ENCODE measurements at regions of chr20 and their contacts with region 1.

Region 1: DNA sequence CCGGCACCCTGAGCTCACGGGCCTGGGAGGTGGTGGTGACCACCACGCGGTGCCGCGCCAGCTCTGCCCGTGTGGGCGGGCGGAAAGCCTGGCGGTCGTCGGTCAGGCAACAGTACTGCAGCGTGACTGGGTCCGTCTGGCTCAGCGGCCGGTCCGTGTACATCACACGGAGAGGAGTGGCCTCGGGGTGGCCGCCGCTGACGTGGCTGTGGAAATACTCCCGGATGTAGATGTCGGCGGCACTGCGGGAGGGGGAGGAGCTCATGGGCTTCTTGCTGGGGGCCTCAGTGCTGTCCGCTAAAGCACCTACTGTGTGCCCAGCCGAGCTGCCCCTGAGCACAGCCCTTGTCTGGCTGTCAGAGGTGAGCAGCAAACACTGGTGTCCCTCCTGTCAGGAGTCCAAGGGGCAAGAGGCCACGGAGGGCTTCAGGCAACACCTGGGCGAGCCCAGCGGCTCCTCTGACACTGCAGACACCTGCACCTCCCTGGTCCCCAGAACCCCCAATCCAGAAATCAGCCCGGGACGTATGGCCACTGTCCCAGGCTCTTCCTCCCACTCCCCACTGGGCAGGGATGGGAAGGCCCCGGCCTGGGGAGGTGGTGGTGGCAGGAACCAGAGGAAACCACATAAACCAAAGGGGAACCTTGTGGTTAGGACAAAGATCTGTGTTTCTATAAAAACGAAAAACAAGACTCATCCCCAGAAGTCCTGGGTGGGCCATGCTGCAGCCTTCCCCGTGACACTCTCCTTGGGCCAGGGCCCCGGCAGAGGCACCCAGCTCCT is 6.5 kb downstream of the HELZ2 start:
- H3K4me3 Mint-ChIP-seq: peak overlapping the region; percentile 70
- H3K27ac Mint-ChIP-seq: peak overlapping the region; percentile 89
- H3K4me1 Mint-ChIP-seq: peaks cover 36% of the 10 kb centered on the region
- H3K27me3 Mint-ChIP-seq: peaks cover 66% of the 10 kb centered on the region

Region 2: DNA sequence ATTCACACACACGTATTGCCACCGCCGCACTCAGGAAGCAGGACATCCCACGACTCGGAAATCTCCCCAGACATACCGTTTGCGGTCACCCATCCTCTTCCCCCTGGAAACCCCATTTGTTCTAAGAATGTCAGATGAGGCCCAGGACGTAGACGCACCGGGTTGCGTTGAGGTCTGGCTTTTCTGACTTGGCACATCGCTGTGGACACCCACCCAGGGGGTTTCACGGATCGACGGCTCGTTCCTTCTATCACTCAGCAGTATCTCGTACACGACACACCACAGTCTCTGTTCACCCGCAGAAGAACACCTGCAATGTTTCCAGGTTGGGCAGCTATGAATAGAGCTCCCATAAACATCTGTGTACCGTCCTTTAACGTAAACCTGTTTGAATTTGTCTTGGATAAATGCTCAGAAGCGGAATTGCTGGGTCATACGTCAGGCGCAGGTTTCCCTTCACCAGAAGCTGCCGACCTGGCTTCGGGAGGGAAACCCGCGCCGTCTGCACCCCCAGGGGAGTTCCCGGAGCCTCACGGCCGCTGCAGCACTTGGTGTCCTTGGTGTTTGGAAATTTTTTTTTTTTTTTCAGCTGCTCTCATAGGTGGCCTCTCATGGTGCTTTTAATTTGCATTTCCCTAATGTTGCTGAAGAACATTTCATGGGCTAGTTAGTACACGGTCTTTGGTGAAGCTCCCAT is 59.4 kb before region 1 on chr20:
- intact Hi-C with region 1: no loop called
- H3K4me3 Mint-ChIP-seq: no peak overlapping the region
- H3K27ac Mint-ChIP-seq: no peak overlapping the region
- H3K4me1 Mint-ChIP-seq: peaks cover 6% of the 10 kb centered on the region
- H3K27me3 Mint-ChIP-seq: peaks cover 68% of the 10 kb centered on the region

Region 3: DNA sequence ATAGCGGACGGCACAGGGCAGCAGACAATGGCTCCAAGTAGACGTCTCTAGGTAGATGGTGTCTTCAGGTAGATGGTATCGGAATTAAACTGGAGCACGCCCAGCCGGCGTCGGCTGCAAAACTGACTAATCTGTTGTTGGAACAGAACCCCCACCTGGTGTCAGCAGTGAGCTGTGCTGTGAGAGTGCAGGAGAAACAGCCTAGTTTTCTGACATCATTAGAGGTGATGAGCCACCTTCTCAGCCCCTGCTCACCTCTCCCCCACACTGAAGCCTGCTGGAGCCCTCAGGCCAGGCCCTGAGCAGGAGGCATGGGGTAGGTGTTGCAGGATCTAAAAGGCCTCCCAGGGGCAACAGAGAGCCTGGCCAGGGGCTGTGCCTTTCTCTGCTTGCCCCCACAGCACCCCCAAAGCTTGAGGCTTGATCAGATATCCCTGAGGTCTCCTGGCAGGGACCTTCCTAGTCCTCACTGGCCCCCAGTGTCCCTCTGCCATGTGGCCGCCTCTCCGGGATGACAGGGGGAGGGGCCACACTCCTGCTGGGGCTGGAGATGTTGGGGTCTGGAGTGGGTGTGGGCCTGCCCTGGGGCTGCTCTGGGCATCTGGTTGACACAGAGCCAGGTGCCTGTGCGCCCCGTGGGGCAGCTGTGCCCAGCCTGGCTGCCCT is 13.4 kb after region 1 on chr20:
- intact Hi-C with region 1: no loop called
- H3K4me3 Mint-ChIP-seq: no peak overlapping the region
- H3K27ac Mint-ChIP-seq: no peak overlapping the region
- H3K4me1 Mint-ChIP-seq: peaks cover 14% of the 10 kb centered on the region
- H3K27me3 Mint-ChIP-seq: peaks cover 75% of the 10 kb centered on the region

Region 4: DNA sequence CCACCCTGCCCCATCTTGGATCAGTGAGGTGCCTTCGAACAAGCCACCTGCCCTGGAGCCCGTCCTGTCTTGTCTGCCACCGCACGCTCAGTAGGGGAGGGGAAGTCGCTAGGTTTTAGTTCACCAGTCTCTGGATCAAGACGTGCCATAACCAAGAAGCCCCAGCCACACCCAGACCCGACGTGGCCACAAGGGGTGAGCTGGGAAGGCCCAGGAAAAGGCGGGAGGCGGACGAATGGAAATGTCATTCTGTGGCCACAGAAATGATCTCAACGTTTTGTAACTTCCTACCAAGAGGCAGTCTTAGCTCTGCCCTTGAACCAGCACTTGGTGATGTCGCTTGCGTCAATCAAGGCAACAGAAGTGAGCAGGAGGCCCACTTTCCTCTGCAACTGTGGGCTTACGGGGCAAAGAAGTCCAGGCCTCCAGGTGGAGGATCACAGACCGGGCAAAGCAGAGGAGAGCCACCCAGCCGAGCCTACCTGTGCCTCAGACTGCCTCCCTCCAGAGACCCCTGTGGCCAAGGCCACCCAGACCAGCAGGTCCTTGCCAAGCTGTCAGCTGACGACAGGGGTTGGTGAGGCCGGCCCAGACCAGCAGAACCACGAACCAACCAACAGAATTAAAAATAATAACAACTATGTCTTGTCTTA is 44.8 kb after region 1 on chr20:
- intact Hi-C with region 1: loop called (anchors 5 kb)
- H3K4me3 Mint-ChIP-seq: peak overlapping the region; percentile 60
- H3K27ac Mint-ChIP-seq: peak overlapping the region; percentile 87
- H3K4me1 Mint-ChIP-seq: peaks cover 44% of the 10 kb centered on the region
- H3K27me3 Mint-ChIP-seq: no peaks in the 10 kb centered on the region

Region 5: GRCh38 chr20:63627129-63627750 is 59.7 kb after region 1 on chr20:
- intact Hi-C with region 1: loop called (anchors 2 kb)
- H3K4me3 Mint-ChIP-seq: peak overlapping the region; percentile 98
- H3K27ac Mint-ChIP-seq: peak overlapping the region; percentile 88
- H3K4me1 Mint-ChIP-seq: peaks cover 52% of the 10 kb centered on the region
- H3K27me3 Mint-ChIP-seq: no peaks in the 10 kb centered on the region

Region 6: DNA sequence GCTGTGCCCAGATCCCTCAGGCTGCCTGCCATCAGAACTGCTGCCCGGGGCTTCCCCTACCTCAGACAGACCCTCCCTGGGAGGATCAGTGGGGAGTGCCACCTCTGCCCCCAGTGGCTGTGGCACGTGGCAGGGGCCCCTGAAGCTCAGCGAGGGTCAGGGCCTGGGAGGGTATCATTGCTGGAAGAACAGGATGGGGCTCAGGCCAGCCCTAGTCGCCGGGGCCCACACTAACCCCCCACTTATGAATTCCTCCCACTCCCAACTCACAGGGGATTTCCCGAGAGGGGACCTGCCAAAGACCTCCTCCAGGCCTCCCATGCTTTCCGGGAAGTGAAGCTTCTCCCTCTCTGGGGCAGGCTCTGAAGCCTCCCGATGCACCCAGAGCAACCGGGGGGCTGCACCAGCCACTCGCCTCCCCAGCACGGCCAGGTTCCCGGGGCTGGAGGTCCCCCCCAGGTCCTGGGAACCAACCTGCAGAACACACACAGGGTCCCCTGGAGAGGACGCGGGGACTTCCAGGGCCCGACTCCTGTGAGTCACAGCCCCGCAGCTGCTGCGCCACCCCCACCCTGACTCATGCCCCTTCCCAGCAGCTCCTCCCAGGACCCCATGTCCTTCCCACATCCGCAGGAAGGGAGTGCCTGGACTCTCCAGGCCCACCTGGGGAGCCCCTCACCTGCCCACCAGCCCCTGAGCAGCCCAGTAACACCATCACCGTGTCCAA is 131.3 kb after region 1 on chr20:
- intact Hi-C with region 1: no loop called
- H3K4me3 Mint-ChIP-seq: peak overlapping the region; percentile 26
- H3K27ac Mint-ChIP-seq: peak overlapping the region; percentile 46
- H3K4me1 Mint-ChIP-seq: peaks cover 42% of the 10 kb centered on the region
- H3K27me3 Mint-ChIP-seq: peaks cover 3% of the 10 kb centered on the region